ENCODE measurements at regions of chr2 and their contacts with region 1.

Region 1: GRCh38 chr2:196954001-196954400 is 27.5 kb upstream of the PGAP1 start:
- DNase-seq: no peak
- H3K4me3 ChIP-seq: no peak overlapping the region
- H3K27ac ChIP-seq: no peak overlapping the region
- H3K4me1 ChIP-seq: no peaks in the 10 kb centered on the region
- H3K27me3 ChIP-seq: no peaks in the 10 kb centered on the region
- CTCF ChIP-seq: no peak
- POLR2A ChIP-seq: no peak

Region 2: DNA sequence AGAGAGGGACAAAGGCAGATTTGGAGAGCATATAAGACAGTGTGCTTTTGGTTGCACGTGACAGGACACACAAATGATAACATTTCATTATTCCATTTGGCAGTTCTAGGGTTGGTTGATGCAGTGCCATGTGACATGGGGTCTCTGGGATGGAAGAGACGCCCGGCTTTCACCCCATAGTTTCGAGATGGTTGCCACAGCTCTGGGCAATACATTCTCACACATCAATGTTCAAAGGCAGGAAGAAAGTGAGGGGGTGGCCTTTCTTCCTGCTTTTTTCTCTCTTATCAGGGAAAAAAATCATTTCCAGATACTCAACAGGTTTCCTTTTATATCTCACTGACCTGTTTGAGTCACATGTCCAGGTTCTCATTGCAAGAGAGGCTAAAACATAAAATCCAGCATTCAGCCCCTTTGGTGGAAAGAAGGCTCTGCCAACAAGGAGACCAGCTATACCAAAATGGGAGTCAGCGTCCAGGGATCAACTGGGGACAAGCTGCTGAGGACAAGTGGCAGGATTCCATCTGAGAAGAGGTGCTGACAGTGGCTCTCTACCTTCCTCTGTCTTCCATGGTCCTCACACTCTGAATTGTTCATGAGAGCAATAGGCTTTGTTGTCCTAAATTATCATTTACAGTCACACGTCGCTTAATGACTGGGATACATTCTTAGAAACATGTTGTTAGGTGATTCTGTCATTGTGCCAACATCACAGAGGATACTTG is 385.7 kb after region 1 on chr2:
- intact Hi-C with region 1: loop called (anchors 5 kb)
- DNase-seq: no peak
- H3K4me3 ChIP-seq: no peak overlapping the region
- H3K27ac ChIP-seq: no peak overlapping the region
- H3K4me1 ChIP-seq: no peaks in the 10 kb centered on the region
- H3K27me3 ChIP-seq: no peaks in the 10 kb centered on the region
- CTCF ChIP-seq: no peak
- POLR2A ChIP-seq: no peak